Activated CD4-positive, alpha-beta memory T cell treated with anti-CD3 and anti-CD28 coated beads for 36 hours (primary cell): ENCODE measurements at regions of chr3 and their contacts with region 1.

Region 1: DNA sequence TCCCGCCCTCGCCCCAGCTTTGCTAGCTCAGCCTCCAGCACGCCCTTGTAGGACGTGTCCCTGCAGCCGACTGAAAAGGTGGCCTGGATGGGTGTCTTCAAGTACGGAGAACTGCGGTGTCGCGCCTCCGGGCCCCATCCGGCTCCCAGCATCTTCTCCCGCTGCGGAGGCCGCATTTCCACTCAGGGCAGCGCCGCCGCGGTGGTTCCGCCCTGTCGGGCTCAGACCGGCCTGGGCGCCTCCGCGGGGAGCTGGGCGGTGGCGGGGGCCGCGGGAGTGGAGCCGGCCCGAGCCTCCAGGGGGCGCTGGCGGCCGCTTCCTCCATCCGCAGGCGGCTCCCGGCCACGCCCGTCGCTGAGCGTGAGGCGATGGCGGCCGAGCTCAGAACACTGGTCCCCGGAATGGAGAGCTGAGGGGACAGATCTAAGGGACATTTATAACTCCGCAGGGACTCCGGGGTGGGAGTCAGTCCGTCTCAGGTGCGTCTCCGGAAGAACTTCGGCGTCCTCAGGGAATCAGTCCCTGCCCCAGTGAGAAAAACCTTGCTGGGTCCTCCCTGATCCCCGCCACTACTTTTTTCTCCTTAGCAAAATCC is 13.6 kb upstream of the SMCO1 start:
- DNase-seq: peak; percentile 92
- H3K4me3 Mint-ChIP-seq: peak overlapping the region; percentile 71
- H3K27ac Mint-ChIP-seq: peak overlapping the region; percentile 87
- H3K4me1 Mint-ChIP-seq: peaks cover 13% of the 10 kb centered on the region
- H3K27me3 Mint-ChIP-seq: peaks cover 2% of the 10 kb centered on the region

Region 2: DNA sequence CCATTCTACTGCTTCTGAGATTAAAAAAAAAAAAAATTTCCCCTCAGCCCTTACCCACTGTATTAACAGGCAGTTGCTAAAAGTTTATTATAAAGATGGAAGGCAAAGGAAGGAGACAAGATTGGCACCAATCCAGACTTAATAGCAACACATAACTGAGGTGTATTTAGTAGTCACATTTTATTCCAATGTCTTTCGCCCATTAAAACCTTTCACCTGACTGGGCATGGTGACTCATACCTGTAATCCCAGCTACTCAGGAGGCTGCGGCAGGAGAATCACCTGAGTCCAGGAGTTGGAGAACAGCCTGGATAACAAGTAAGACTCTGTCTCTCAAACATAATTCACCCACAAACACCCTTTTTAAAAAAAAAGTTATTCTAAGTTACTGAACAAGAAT is 1090.4 kb before region 1 on chr3:
- CTCF ChIA-PET with region 1: no interaction called
- POLR2A ChIA-PET with region 1: no interaction called
- intact Hi-C with region 1: no loop called
- DNase-seq: no peak
- H3K4me3 Mint-ChIP-seq: no peak overlapping the region
- H3K27ac Mint-ChIP-seq: no peak overlapping the region
- H3K4me1 Mint-ChIP-seq: peaks cover 42% of the 10 kb centered on the region
- H3K27me3 Mint-ChIP-seq: no peaks in the 10 kb centered on the region

Region 3: DNA sequence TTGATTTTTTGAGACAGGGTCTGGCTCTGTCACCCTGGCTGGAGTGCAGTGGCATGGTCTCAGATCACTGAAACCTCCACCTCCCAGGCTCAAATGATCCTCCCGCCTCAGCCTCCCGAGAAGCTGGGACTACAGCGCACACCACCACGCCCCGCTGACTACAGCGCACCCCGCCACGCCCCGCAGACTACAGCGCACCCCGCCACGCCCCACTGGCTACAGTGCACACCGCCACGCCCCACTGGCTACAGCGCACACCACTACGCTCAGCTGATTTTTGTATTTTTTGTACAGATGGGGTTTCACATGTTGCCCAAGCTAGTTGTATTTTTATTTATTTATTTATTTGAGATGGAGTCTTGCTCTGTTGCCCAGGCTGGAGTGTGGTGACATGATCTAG is 276.8 kb before region 1 on chr3:
- CTCF ChIA-PET with region 1: interaction called, 32 read pairs
- POLR2A ChIA-PET with region 1: no interaction called
- intact Hi-C with region 1: no loop called
- DNase-seq: no peak
- H3K4me3 Mint-ChIP-seq: no peak overlapping the region
- H3K27ac Mint-ChIP-seq: no peak overlapping the region
- H3K4me1 Mint-ChIP-seq: peaks cover 6% of the 10 kb centered on the region
- H3K27me3 Mint-ChIP-seq: no peaks in the 10 kb centered on the region

Region 4: GRCh38 chr3:196486263-196486662 is 42.5 kb before region 1 on chr3:
- CTCF ChIA-PET with region 1: interaction called, 34 read pairs
- POLR2A ChIA-PET with region 1: no interaction called
- intact Hi-C with region 1: loop called (anchors 5 kb)
- DNase-seq: peak; percentile 37
- H3K4me3 Mint-ChIP-seq: no peak overlapping the region
- H3K27ac Mint-ChIP-seq: no peak overlapping the region
- H3K4me1 Mint-ChIP-seq: peaks cover 12% of the 10 kb centered on the region
- H3K27me3 Mint-ChIP-seq: no peaks in the 10 kb centered on the region

Region 5: GRCh38 chr3:196513697-196514349 is 14.9 kb before region 1 on chr3:
- CTCF ChIA-PET with region 1: interaction called, 17 read pairs
- POLR2A ChIA-PET with region 1: interaction called, 4 read pairs
- intact Hi-C with region 1: no loop called
- DNase-seq: no peak
- H3K4me3 Mint-ChIP-seq: no peak overlapping the region
- H3K27ac Mint-ChIP-seq: no peak overlapping the region
- H3K4me1 Mint-ChIP-seq: peaks cover 4% of the 10 kb centered on the region
- H3K27me3 Mint-ChIP-seq: peaks cover 1% of the 10 kb centered on the region

Region 6: DNA sequence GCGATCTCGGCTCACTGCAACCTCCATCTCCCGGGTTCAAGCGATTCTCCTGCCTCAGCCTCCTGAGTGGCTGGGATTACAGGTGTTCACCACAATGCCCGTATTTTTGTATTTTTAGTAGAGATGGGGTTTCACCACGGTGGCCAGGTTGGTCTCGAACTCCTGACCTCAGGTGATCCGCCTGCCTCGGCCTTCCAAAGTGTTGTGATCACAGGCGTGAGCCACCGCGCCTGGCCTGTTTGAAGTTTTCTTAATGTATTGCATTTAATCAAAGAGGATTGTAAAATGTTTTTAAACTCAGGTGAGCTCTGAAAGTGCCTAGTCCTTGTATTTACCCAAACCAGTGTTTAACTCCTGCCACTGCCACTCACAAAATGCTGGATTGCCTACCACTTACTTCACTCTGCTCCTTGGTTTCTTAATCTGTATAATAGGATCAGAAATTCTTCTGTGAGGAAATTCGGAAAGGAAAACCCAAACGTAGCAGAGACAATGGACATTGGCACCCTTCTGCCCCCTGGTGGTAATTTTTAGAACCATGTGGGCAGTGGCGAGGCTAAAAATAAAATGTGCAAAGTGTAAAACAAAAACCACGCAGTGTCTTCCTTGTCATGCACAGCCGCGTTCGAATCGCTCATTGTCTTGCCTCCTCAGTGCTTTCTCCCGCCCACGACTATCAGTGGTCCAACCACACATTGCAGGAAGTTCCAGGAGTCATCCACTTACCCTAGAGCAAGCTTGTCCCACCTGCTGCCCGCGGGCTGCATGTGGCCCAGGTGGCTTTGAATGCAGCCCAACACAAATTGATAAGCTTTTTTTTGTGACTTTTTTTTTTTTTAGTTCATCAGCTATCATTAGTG is 156.0 kb after region 1 on chr3:
- CTCF ChIA-PET with region 1: interaction called, 15 read pairs
- POLR2A ChIA-PET with region 1: no interaction called
- intact Hi-C with region 1: loop called (anchors 2 kb)
- DNase-seq: peak; percentile 80
- H3K4me3 Mint-ChIP-seq: peak overlapping the region; percentile 48
- H3K27ac Mint-ChIP-seq: peak overlapping the region; percentile 31
- H3K4me1 Mint-ChIP-seq: peaks cover 13% of the 10 kb centered on the region
- H3K27me3 Mint-ChIP-seq: no peaks in the 10 kb centered on the region